ENCODE measurements at regions of chr6 and their contacts with region 1.

Region 1: DNA sequence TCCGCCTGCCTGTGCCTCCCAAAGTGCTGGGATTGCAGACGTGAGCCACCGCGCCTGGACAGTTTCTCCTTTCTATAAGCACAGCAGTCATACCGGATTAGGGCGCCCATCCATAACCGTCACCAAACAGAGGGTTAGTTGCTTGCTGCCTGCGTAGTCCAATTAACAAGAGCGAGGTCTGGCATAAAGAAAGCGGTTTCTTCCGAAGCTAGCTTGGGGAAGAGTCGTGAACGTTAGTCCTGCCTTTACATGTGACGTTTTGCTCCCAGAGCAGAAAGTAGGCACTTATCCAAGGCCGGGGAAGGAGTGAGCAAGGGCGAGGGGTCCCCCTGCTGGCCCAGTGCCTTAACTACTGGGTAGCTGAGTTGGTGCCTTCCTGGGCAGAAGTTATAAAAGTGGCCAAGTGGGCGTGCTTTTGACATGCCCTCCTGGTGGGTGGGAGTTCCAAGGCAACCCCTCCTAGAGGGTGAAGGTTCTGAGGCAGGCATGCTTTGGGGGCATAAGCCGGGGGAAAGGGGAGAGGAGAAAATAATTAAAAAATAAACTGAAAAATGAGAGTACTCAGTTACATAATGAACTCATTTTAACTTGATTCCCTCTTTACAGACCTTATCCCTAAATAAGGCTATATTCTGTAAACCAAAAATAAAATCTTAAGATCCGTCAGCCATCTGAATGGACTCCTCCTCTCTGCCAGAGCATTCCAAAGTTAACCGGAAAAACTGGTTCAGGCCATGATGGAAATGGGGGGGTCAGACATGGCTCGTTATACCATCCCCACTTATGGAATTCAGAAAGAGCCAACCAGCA is 88.0 kb downstream of the FAM217A start:
- DNase-seq: peak; percentile 90
- ATAC-seq: peak; percentile 94
- H3K4me3 Mint-ChIP-seq: peak overlapping the region; percentile 29
- H3K27ac Mint-ChIP-seq: peak overlapping the region; percentile 42
- H3K4me1 Mint-ChIP-seq: peaks cover 44% of the 10 kb centered on the region
- H3K27me3 Mint-ChIP-seq: no peaks in the 10 kb centered on the region
- CTCF ChIP-seq: peak; percentile 78

Region 2: GRCh38 chr6:3751730-3752542 is 239.0 kb before region 1 on chr6:
- CTCF ChIA-PET with region 1: interaction called, 14 read pairs
- POLR2A ChIA-PET with region 1: no interaction called
- DNase-seq: peak; percentile 79
- ATAC-seq: peak; percentile 40
- H3K4me3 Mint-ChIP-seq: peak overlapping the region; percentile 62
- H3K27ac Mint-ChIP-seq: no peak overlapping the region
- H3K4me1 Mint-ChIP-seq: peaks cover 56% of the 10 kb centered on the region
- H3K27me3 Mint-ChIP-seq: peaks cover 57% of the 10 kb centered on the region
- CTCF ChIP-seq: no peak; the same call in 1 of the 2 replicates

Region 3: GRCh38 chr6:3773678-3774296 is 217.1 kb before region 1 on chr6:
- CTCF ChIA-PET with region 1: no interaction called
- POLR2A ChIA-PET with region 1: interaction called, 11 read pairs
- DNase-seq: no peak
- ATAC-seq: no peak
- H3K4me3 Mint-ChIP-seq: no peak overlapping the region
- H3K27ac Mint-ChIP-seq: no peak overlapping the region
- H3K4me1 Mint-ChIP-seq: peaks cover 24% of the 10 kb centered on the region
- H3K27me3 Mint-ChIP-seq: no peaks in the 10 kb centered on the region
- CTCF ChIP-seq: no peak

Region 4: DNA sequence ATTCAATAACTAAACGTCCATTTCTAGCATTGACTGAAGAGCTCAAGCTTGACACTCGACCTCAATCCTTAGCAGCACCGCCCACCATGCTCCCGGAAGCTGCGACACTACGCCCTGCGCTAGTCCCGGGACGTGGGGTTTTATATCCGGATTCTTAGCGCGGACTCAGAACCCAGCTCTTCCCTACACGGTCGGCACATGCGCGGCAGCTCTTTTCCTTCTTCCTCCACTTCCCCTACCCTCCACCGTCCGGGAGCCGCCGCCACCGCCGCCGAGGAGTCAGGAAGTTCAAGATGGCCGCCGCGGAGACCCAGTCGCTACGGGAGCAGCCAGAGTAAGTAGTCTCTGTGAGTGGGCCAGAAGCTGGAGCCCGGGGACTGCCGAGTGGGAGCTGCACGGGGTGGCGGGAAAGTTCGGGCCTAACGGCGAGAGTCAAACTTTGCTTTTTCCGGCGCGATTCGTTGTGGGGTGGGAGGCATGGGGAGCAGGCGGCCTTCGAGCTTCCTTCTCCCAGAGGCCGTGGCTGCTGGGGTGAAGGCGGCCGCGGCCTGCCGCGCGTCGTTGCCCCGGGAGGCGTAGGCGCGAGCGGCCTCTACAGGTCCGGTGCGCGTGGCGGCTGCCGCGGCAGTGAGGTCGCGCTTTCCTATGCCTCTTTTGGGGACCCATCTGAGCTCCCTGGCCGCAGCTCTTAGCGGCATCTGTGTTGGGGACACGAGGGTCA is 30.4 kb after region 1 on chr6:
- CTCF ChIA-PET with region 1: interaction called, 11 read pairs
- POLR2A ChIA-PET with region 1: interaction called, 3 read pairs
- DNase-seq: peak; percentile 90
- ATAC-seq: peak; percentile 83
- H3K4me3 Mint-ChIP-seq: peak overlapping the region; percentile 87
- H3K27ac Mint-ChIP-seq: peak overlapping the region; percentile 98
- H3K4me1 Mint-ChIP-seq: peaks cover 54% of the 10 kb centered on the region
- H3K27me3 Mint-ChIP-seq: no peaks in the 10 kb centered on the region
- CTCF ChIP-seq: no peak

Measured in WTC11 (cell line).